ENCODE measurements at regions of chr5 and their contacts with region 1.

Region 1: GRCh38 chr5:44300551-44300950 is 88.7 kb downstream of the FGF10 start:
- DNase-seq: no peak

Region 2: DNA sequence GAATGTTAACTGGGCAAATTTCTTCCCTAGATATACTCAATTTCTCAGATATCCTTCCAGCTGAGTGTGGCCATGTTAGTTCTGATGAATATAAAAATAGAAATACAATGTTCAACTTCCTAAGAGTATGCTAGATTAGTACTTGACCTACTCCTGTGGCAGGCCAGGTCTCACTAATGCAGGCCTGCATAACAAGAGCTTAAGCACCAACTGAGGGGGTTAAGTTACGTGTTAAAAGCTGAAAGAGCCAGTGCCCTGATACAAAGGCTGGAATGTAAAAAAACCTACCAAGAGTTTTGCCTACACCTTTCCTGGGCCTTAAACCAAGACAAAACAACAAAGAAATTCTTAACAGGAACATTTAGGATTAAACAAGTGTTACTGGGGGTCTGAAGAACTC is 611.0 kb after region 1 on chr5:
- intact Hi-C with region 1: loop called in 1 of 2 experiments (anchors 10 kb)
- DNase-seq: no peak